Activated CD8-positive, alpha-beta memory T cell treated with anti-CD3 and anti-CD28 coated beads, Interleukin-2, amount 10 ng/mL, durations not matched to agents 7 days and 5 days (primary cell): ENCODE measurements at regions of chr20 and their contacts with region 1.

Region 1: GRCh38 chr20:49484180-49485140 is 2.0 kb upstream of the KCNB1 start:
- DNase-seq: peak; percentile 80
- ATAC-seq: peak; percentile 90
- H3K4me3 Mint-ChIP-seq: peak overlapping the region; percentile 74
- H3K27ac Mint-ChIP-seq: no peak overlapping the region
- H3K4me1 Mint-ChIP-seq: peaks cover 6% of the 10 kb centered on the region
- H3K27me3 Mint-ChIP-seq: peaks cover 62% of the 10 kb centered on the region

Region 2: DNA sequence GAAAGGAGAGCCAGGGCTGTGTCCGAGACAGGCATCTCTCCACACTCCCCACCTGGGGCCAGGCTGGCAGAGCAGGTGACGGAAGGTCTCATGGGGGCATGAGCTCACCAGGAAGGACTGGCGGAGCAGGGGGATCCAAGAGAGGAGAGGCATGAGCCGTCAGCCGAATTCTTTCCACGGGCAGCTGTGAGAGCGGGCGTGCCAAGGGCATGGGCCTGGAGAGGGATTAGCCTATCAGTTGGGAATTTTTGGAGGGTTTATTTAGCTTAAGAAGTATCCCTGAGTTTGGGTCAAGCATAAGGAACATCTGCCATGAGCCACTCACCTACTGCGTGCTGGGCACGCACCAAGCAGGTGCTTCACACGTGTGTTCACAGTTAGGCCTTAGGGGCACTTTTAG is 146.4 kb before region 1 on chr20:
- CTCF ChIA-PET with region 1: interaction called, 31 read pairs
- DNase-seq: no peak
- ATAC-seq: no peak
- H3K4me3 Mint-ChIP-seq: no peak overlapping the region
- H3K27ac Mint-ChIP-seq: no peak overlapping the region
- H3K4me1 Mint-ChIP-seq: peaks cover 3% of the 10 kb centered on the region
- H3K27me3 Mint-ChIP-seq: peaks cover 7% of the 10 kb centered on the region

Region 3: DNA sequence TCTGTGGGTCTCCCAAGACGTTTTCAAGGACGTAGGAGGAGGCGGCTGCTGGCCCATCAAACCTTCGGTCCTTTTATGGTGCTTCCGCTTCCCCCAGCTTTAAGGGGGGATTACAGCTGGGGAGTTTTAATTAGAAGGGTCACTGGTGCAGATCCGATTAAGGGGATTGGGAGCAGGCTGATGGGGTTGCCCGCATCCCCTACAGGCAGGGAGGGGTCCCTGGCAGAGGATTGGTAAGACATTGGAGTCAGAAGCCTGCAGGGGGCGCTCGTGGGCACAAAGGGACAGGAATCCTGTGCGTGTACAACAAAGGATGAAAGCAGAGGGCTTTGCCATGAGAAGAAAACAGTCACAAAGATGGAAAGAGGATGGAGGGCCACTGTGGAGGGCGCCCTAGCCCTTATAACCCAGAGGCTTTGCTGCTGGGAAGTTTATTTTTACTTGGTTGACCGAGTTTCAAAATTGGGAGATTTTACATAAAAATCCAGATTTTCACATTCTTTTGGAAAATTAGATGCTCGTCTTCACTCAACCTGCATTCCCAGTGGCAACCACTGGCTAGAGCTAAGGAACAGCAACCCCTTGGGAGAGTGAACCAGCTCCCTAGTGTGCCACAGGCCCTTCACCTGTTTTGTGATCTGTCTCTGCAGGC is 99.9 kb before region 1 on chr20:
- CTCF ChIA-PET with region 1: interaction called, 15 read pairs
- DNase-seq: peak; percentile 76
- ATAC-seq: peak; percentile 51
- H3K4me3 Mint-ChIP-seq: no peak overlapping the region
- H3K27ac Mint-ChIP-seq: no peak overlapping the region
- H3K4me1 Mint-ChIP-seq: no peaks in the 10 kb centered on the region
- H3K27me3 Mint-ChIP-seq: peaks cover 28% of the 10 kb centered on the region

Region 4: DNA sequence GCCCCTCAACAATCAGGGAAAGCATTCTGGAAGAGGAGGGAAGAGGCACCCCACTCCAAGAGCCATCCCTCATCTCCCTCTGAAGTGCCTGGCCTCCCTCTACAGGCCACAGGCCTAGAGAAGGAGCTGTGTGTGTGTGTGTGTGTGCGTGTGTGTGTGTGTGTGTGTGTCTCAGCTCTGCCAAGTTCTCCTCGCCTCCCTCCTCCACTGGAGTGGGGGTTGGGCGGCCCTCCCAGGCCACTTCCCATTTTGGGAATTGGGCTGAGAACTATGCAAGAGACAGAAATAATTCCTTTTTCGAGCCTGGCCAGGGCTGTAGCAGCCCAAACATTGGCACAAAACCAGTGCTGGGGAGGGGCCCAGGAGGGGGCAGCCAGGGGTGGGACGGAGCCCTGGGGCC is 37.7 kb before region 1 on chr20:
- CTCF ChIA-PET with region 1: no interaction called
- DNase-seq: no peak
- ATAC-seq: no peak
- H3K4me3 Mint-ChIP-seq: no peak overlapping the region
- H3K27ac Mint-ChIP-seq: no peak overlapping the region
- H3K4me1 Mint-ChIP-seq: no peaks in the 10 kb centered on the region
- H3K27me3 Mint-ChIP-seq: peaks cover 26% of the 10 kb centered on the region

Region 5: GRCh38 chr20:49501917-49502316 is 17.5 kb after region 1 on chr20:
- CTCF ChIA-PET with region 1: interaction called, 15 read pairs
- DNase-seq: no peak
- ATAC-seq: no peak
- H3K4me3 Mint-ChIP-seq: no peak overlapping the region
- H3K27ac Mint-ChIP-seq: no peak overlapping the region
- H3K4me1 Mint-ChIP-seq: no peaks in the 10 kb centered on the region
- H3K27me3 Mint-ChIP-seq: peaks cover 31% of the 10 kb centered on the region

Region 6: GRCh38 chr20:49534255-49534712 is 49.8 kb after region 1 on chr20:
- CTCF ChIA-PET with region 1: interaction called, 12 read pairs
- DNase-seq: peak; percentile 84
- ATAC-seq: peak; percentile 71
- H3K4me3 Mint-ChIP-seq: peak overlapping the region; percentile 40
- H3K27ac Mint-ChIP-seq: peak overlapping the region; percentile 94
- H3K4me1 Mint-ChIP-seq: peaks cover 23% of the 10 kb centered on the region
- H3K27me3 Mint-ChIP-seq: peaks cover under 1% of the 10 kb centered on the region